ENCODE measurements at regions of chr6 and their contacts with region 1.

Region 1: GRCh38 chr6:1596088-1596852 is 13.4 kb upstream of the FOXC1 start:
- DNase-seq: peak; percentile 39 to 85 (median 61)
- H3K4me3 ChIP-seq: no peak overlapping the region
- H3K27ac ChIP-seq: no peak overlapping the region
- H3K4me1 ChIP-seq: no peaks in the 10 kb centered on the region
- H3K27me3 ChIP-seq: peaks cover 45% of the 10 kb centered on the region
- CTCF ChIP-seq: peak; percentile 88 to 96 (median 94)
- POLR2A ChIP-seq: no peak

Region 2: DNA sequence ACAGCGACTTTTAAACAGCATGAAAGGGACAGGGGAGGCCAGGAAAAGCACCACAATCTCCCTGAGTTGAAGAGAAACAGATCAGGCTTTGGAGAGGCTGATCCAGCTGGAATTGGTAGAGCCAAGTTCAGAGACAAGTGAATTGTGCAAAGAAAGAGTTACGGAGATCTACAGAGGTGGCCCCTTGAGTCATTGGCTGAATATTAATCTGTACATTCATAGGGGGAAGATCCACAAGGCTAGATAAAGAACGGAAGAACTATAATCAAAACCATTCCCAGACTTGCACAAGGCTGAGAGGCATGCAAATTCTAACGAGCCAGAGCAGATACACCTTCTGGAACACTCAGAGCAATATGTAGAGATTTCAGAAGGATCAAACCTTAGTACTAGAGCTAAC is 298.5 kb before region 1 on chr6:
- intact Hi-C with region 1: no loop called
- DNase-seq: no peak
- H3K4me3 ChIP-seq: no peak overlapping the region
- H3K27ac ChIP-seq: no peak overlapping the region
- H3K4me1 ChIP-seq: no peaks in the 10 kb centered on the region
- H3K27me3 ChIP-seq: peaks cover 9% of the 10 kb centered on the region
- CTCF ChIP-seq: no peak
- POLR2A ChIP-seq: no peak

Region 3: DNA sequence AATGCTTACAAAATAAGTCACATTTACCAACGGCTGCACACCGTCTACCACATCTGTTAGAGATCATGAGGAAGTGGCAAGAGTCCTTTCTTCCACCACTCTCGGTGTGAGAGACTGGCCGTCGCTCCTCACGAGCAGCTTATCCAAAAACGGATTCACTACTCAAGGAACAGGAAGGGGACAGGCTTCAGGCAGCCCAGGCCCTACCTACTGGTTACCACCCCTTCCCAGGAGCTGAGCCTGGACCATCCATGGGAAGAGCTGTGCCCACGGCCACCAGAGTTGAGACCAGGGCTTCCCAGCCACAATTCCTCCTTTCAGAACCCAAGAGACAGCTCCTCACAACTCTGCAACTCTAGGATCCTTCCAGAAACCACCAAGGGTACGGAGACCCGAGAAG is 169.9 kb before region 1 on chr6:
- intact Hi-C with region 1: no loop called
- DNase-seq: no peak
- H3K4me3 ChIP-seq: no peak overlapping the region
- H3K27ac ChIP-seq: no peak overlapping the region
- H3K4me1 ChIP-seq: no peaks in the 10 kb centered on the region
- H3K27me3 ChIP-seq: peaks cover 14% of the 10 kb centered on the region
- CTCF ChIP-seq: no peak
- POLR2A ChIP-seq: no peak

Region 4: DNA sequence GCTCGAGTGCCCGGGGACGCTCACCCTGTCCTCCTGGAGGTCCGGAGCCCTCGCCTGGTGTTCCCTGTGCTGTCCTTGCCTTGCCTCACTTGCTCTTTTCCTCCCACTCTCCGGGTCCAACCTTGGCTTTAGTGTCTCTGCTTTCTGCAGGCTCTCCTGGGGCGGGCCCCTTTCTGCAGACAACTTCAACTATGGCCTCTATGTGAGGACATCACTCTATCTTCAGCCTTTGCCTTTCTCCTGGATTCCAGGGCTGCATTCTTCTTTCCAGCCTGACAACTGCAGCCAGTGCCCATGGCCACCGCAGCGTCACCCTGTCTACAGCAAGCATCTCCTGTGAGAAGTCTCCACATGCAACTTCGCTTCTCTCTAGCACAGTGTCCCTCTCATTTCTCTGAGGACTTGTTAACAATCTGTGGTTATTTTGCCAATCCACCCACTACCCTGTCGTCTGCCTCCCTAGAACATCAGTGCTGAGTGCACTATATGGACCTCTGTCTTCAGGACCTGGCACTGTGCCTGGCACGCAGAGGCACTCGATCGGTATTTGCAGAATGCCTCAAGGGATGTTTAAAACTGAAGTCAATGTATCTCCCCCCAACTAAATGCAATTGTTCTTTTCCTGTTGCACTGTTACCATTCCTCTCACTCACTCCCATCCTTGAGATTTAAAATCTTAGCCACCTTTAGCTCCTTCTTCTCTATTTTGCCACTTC is 49.4 kb after region 1 on chr6:
- intact Hi-C with region 1: no loop called
- DNase-seq: no peak
- H3K4me3 ChIP-seq: no peak overlapping the region
- H3K27ac ChIP-seq: no peak overlapping the region
- H3K4me1 ChIP-seq: no peaks in the 10 kb centered on the region
- H3K27me3 ChIP-seq: no peaks in the 10 kb centered on the region
- CTCF ChIP-seq: no peak
- POLR2A ChIP-seq: no peak

Region 5: DNA sequence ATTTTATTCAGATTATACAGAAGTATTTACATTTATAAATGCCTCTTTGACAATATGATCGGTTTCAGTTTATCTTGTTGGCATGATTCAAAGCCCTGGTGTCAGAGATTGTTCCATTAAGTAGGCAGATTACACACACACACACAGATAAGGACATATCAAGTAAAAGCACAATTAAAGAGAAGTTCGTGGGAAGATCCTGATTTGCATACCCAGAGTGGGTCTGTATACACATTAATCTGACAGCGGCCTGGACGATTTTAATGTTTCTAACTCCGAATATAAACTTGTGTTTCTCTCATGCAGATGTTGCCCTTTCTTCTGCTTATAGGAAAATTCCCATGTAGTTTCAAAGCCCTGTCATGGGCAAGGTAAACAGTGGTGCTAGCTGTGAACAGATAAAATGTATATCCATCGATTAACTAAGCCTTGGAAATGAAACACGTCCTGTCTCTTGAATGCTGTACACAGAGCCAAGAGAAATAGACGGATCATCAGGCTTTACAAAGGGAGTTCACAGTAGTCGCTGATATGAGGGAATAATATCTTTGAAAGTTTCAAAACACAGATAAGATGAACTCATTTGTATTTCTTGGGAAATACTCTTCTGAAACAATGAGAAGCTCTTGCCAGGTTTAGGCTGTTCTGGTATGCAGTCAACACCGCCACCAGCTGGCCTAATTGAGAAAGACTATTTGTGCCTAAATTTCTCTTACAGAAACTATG is 757.3 kb after region 1 on chr6:
- intact Hi-C with region 1: loop called in 1 of 2 experiments (anchors 5 kb)
- DNase-seq: peak; percentile 67 to 90 (median 78)
- H3K4me3 ChIP-seq: no peak overlapping the region
- H3K27ac ChIP-seq: peak overlapping the region in 1 of 5 donors; percentile 30
- H3K4me1 ChIP-seq: peaks cover 0 to 9% of the 10 kb centered on the region in 2 donors
- H3K27me3 ChIP-seq: no peaks in the 10 kb centered on the region
- CTCF ChIP-seq: peak; percentile 53 to 90 (median 82)
- POLR2A ChIP-seq: no peak

Region 6: DNA sequence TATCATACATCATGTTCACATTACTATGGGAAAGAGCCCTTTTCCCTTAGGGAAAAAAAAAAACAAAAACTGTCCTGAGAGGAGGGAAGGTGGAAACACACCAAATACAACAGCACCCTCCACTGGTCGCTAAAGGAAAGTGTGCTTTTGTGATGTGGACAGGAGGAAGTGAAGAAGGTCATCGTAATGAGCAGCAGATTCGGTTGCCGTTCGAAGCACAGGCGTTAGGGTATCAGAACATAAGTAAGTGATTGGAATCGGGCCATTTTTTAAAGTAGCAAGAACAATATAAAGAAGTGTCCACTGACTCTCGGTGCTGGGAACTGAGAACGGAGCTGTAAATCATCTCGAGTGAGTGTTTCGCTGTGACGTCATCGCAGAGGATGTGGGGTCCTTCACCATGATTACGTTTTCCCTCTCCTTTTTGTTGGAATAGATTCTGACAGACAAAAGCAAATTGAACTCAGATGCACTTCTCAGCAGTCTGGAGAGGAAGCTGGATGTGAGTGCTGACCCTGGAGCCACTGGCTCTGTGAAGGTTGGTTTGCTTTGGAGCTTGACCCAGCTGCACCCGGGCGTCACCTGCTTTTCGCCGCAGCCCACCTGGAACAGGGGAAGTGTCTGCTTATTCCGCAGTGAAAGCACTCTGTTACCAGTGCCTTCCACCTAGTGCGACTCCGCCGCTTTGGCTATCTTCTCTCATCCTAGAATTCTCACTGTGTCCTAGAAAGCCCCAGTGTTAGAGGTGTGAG is 852.7 kb after region 1 on chr6:
- intact Hi-C with region 1: loop called (anchors 5 to 10 kb)
- DNase-seq: peak in 6 of 7 donors; percentile 17 to 60 (median 26)
- H3K4me3 ChIP-seq: no peak overlapping the region
- H3K27ac ChIP-seq: no peak overlapping the region
- H3K4me1 ChIP-seq: no peaks in the 10 kb centered on the region
- H3K27me3 ChIP-seq: no peaks in the 10 kb centered on the region
- CTCF ChIP-seq: peak in 5 of 6 experiments; percentile 18 to 57 (median 56)
- POLR2A ChIP-seq: no peak

Region 7: GRCh38 chr6:2634139-2634964 is 1038.1 kb after region 1 on chr6:
- intact Hi-C with region 1: loop called (anchors 2 to 5 kb)
- DNase-seq: peak; percentile 83 to 93 (median 90)
- H3K4me3 ChIP-seq: peak overlapping the region in 2 of 4 donors; percentile 18 to 55
- H3K27ac ChIP-seq: peak overlapping the region in 3 of 5 donors; percentile 34 to 80 (median 73)
- H3K4me1 ChIP-seq: peaks cover 9 to 19% of the 10 kb centered on the region in 2 donors
- H3K27me3 ChIP-seq: no peaks in the 10 kb centered on the region
- CTCF ChIP-seq: peak; percentile 88 to 99 (median 97)
- POLR2A ChIP-seq: no peak

Region 8: GRCh38 chr6:2639896-2640295 is 1043.6 kb after region 1 on chr6:
- intact Hi-C with region 1: loop called (anchors 2 to 5 kb)
- DNase-seq: no peak
- H3K4me3 ChIP-seq: no peak overlapping the region
- H3K27ac ChIP-seq: no peak overlapping the region
- H3K4me1 ChIP-seq: no peaks in the 10 kb centered on the region
- H3K27me3 ChIP-seq: peaks cover 8% of the 10 kb centered on the region
- CTCF ChIP-seq: no peak
- POLR2A ChIP-seq: no peak

Region 9: GRCh38 chr6:2738373-2738979 is 1142.2 kb after region 1 on chr6:
- intact Hi-C with region 1: loop called in 1 of 2 experiments (anchors 10 kb)
- DNase-seq: peak; percentile 36 to 73 (median 50)
- H3K4me3 ChIP-seq: no peak overlapping the region
- H3K27ac ChIP-seq: no peak overlapping the region
- H3K4me1 ChIP-seq: no peaks in the 10 kb centered on the region
- H3K27me3 ChIP-seq: no peaks in the 10 kb centered on the region
- CTCF ChIP-seq: peak; percentile 42 to 72 (median 70)
- POLR2A ChIP-seq: no peak

Measured in adrenal gland (tissue), 19 donors.